ENCODE measurements at regions of chr6 and their contacts with region 1.

Region 1: DNA sequence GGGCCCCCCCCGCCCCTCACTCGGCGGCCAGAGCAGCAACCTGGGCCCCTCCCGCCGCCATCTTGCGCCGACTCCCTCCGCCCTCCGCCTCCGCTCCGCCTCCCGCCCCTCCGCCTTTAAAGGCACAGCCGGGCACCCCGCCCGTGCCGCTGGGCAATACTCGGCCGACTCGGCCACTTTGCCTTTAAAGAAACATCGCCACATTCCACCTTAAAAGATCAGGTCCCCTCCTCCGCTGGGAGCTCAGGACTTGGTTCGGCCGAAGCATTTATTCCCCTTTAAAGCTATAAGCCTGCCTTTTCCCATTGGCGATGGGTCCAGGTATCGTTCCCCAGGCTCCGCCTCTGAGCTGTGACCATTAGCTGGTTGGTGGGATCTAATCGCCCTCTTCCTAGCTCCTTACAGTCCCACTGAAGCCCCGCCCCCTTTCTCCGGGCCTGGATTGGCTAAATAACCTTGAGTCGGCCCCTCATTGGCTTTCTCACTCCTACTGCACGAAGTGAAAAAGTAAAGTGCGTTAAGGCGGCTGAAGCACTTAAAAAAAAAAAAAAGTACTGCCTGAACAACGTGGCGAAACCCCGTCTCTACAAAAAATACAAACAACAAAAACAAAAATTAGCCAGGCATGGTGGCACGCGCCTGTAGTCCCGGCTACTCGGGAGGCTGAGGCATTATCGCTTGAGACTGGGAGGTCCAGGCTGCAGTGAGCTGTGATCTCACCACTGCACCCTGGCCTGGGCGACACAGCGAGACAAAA is at the start of gene ZBTB22:
- DNase-seq: peak; percentile 100
- H3K4me3 Mint-ChIP-seq: peak within 1 kb of the TSS; percentile 98
- H3K27ac Mint-ChIP-seq: peak within 1 kb of the TSS; percentile 90
- H3K4me1 Mint-ChIP-seq: peaks cover 75% of the 10 kb centered on the region
- H3K27me3 Mint-ChIP-seq: no peaks in the 10 kb centered on the region
- CTCF ChIP-seq: no peak
- total RNA-seq, gene ZBTB22: 22.6 and 26.4 TPM in 2 replicates

Region 2: GRCh38 chr6:33213166-33213988 is 104.5 kb before region 1 on chr6:
- CTCF ChIA-PET with region 1: no interaction called
- intact Hi-C with region 1: no loop called
- DNase-seq: peak; percentile 26
- H3K4me3 Mint-ChIP-seq: peak overlapping the region; percentile 72
- H3K27ac Mint-ChIP-seq: peak overlapping the region; percentile 52
- H3K4me1 Mint-ChIP-seq: peaks cover 31% of the 10 kb centered on the region
- H3K27me3 Mint-ChIP-seq: peaks cover 68% of the 10 kb centered on the region
- CTCF ChIP-seq: no peak

Region 3: GRCh38 chr6:33248925-33249731 is 68.7 kb before region 1 on chr6:
- CTCF ChIA-PET with region 1: no interaction called
- intact Hi-C with region 1: no loop called
- DNase-seq: peak; percentile 97
- H3K4me3 Mint-ChIP-seq: peak overlapping the region; percentile 66
- H3K27ac Mint-ChIP-seq: peak overlapping the region; percentile 51
- H3K4me1 Mint-ChIP-seq: peaks cover 26% of the 10 kb centered on the region
- H3K27me3 Mint-ChIP-seq: peaks cover 11% of the 10 kb centered on the region
- CTCF ChIP-seq: no peak

Region 4: DNA sequence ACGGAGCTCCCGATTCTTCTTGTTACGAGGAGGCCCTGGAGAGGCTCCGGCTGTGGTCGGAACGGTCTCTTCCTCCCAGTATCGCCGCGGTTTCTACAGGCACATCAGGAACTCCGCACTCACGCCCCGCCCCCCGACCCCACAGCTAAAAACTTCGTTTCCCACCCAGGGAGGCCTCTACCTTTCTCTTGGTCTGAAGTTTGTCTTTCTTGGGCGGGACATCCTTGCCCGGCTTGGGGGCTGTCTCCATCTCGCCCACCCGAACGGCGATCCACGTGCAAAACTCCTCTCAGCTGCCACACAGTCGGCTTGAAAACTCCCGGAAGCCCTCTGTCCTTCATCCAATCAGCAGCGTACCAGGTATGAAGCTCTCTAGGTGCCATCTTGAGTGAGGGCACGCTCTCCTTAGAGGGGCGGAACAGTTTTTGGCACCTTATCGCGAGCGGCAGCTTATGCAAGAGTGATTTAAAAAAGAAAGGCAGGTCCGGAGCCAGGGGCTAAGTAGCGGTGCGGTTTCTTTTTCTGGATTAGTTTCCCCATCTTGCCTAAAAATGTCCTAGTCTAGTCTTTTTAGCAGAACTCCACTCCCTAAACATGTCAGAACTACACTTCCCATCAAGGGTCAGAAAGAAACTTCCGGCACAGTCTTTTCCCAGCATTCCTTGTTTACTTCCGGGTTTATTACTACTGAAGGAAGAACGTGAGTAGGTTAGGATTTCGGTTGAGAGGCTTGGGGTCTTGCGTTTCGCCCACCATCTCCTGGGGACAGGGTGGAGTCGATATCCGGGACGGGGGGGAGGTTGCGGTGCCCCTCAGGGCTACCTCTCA is 28.7 kb before region 1 on chr6 and contains the starts of genes PFDN6 and WDR46:
- CTCF ChIA-PET with region 1: interaction called, 10 read pairs
- intact Hi-C with region 1: no loop called
- DNase-seq: peak; percentile 82
- H3K4me3 Mint-ChIP-seq: peak within 1 kb of the TSS; percentile 81
- H3K27ac Mint-ChIP-seq: peak within 1 kb of the TSS; percentile 69
- H3K4me1 Mint-ChIP-seq: peaks cover 39% of the 10 kb centered on the region
- H3K27me3 Mint-ChIP-seq: no peaks in the 10 kb centered on the region
- CTCF ChIP-seq: no peak
- total RNA-seq, gene PFDN6: 141 and 168 TPM in 2 replicates
- total RNA-seq, gene WDR46: 124 and 125 TPM in 2 replicates

Region 5: DNA sequence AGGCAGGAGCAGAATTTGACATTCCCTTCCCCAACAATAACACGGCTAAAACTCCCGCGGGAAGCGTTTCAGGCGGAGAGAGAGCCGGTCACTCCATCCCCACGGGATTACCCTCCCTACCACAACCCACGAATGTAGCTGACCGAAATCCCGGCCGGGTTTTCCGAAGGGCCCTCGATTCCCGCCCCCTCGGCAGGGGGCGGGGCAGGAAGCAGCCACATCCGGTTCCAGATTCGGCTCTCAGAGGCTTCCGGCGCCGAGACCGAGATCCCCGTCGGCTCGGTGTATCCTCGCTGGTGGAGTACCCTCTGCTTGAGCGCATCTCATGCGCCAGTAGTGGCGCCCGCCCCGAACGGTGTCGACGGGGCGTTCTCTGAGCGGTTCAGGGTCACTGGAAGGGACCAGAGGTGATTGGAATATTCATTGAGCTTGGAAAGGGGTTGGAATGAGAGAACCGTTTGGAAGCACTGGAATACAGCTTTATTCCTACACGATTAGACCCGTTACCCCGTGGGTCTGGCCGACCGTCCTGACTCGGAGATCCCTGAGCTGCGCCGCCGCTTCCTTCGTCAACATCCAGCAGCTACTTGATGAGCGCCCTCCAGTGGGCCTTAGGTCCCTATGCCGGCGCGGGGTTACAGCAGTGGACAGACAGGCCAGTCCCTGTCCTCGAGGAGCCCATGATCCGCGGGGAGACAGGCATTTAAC is 18.5 kb before region 1 on chr6:
- CTCF ChIA-PET with region 1: interaction called, 12 read pairs
- intact Hi-C with region 1: no loop called
- DNase-seq: peak; percentile 97
- H3K4me3 Mint-ChIP-seq: peak overlapping the region; percentile 90
- H3K27ac Mint-ChIP-seq: peak overlapping the region; percentile 98
- H3K4me1 Mint-ChIP-seq: peaks cover 25% of the 10 kb centered on the region
- H3K27me3 Mint-ChIP-seq: no peaks in the 10 kb centered on the region
- CTCF ChIP-seq: peak; percentile 85

Region 6: GRCh38 chr6:33330736-33331135 is 12.9 kb after region 1 on chr6:
- CTCF ChIA-PET with region 1: interaction called, 10 read pairs
- intact Hi-C with region 1: no loop called
- DNase-seq: no peak
- H3K4me3 Mint-ChIP-seq: no peak overlapping the region
- H3K27ac Mint-ChIP-seq: no peak overlapping the region
- H3K4me1 Mint-ChIP-seq: no peaks in the 10 kb centered on the region
- H3K27me3 Mint-ChIP-seq: peaks cover 16% of the 10 kb centered on the region
- CTCF ChIP-seq: no peak

Region 7: GRCh38 chr6:33344701-33345697 is 27.2 kb after region 1 on chr6:
- CTCF ChIA-PET with region 1: interaction called, 11 read pairs
- intact Hi-C with region 1: no loop called
- DNase-seq: peak; percentile 74
- H3K4me3 Mint-ChIP-seq: no peak overlapping the region
- H3K27ac Mint-ChIP-seq: no peak overlapping the region
- H3K4me1 Mint-ChIP-seq: no peaks in the 10 kb centered on the region
- H3K27me3 Mint-ChIP-seq: peaks cover 41% of the 10 kb centered on the region
- CTCF ChIP-seq: peak; percentile 77

Region 8: DNA sequence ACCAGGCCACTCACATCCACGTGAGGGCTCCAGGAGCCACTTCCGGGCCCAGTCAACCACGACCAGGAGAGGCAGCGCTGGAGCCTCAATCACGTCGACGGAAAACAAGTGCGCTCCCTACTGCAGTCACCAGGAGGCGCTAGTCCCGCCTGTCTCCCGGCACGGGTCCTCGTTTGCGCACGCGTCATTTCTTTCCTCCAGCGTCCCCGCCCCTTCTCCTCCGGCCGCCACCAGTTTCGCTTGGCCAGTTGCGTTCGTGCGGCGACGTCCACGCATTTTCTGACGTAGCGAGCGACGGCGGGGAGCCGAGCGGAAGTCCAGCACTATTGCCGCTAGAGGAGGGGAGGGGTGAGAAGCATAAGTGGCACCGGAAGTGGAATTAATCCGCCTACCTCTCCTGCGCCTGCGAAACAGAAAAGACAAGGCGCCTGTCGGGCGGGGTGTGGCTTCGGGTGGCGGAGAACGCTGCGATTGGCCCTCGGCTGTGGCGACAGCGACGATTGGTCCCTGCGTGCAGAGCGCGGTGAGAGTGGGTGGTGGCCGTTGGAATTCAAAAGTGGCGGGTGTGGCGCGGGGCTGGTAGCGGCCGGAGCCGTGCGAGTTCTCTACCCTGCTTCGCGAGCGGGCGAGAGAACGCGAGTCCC is 73.6 kb after region 1 on chr6 and contains the start of gene KIFC1:
- CTCF ChIA-PET with region 1: no interaction called
- intact Hi-C with region 1: loop called (anchors 5 kb)
- DNase-seq: peak; percentile 100
- H3K4me3 Mint-ChIP-seq: peak within 1 kb of the TSS; percentile 86
- H3K27ac Mint-ChIP-seq: peak within 1 kb of the TSS; percentile 96
- H3K4me1 Mint-ChIP-seq: peaks cover 41% of the 10 kb centered on the region
- H3K27me3 Mint-ChIP-seq: no peaks in the 10 kb centered on the region
- CTCF ChIP-seq: peak; percentile 97
- total RNA-seq, gene KIFC1: 105 and 140 TPM in 2 replicates

Region 9: GRCh38 chr6:33425668-33426577 is 108.1 kb after region 1 on chr6:
- CTCF ChIA-PET with region 1: interaction called, 10 read pairs
- intact Hi-C with region 1: no loop called
- DNase-seq: peak; percentile 95
- H3K4me3 Mint-ChIP-seq: peak overlapping the region; percentile 87
- H3K27ac Mint-ChIP-seq: peak overlapping the region; percentile 64
- H3K4me1 Mint-ChIP-seq: peaks cover 49% of the 10 kb centered on the region
- H3K27me3 Mint-ChIP-seq: peaks cover 28% of the 10 kb centered on the region
- CTCF ChIP-seq: peak; percentile 76

Measured in Calu3 (cell line).